ENCODE measurements at regions of chr4 and their contacts with region 1.

Region 1: DNA sequence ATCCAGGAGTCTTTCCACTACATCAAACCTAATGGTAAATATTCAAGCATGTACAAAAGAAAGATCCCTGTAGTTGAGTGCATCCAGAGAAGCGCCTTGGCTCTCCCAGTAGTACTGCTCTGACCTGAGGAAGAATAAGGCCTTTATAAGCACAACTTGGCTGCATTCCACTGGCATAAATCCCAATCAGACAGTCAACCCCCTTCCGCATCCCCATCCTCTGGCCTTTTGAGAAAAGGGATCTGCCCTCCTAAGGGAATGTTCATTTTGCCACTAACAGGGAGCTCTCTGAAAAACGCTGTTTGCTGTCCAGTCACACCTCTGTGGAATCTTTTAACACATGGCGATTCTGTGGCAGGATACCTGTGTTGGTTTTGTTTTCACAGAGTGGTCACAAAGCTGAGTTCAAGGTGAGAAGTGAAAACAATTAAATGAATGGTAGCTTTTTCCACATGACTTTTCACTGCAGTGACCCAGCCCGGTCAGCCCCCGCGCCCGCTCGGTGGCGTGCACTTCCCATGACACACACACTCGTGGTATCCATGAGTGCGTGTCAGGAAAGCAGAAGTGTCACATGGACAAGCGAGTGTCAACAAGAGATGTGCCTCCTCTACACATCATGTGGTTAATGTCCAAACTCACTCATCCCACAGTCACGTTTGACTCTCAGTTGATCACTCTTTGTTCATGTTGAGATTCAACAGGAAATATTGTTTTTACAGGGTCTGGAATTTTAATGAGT is 112.2 kb upstream of the ENPP6 start:
- DNase-seq: peak; percentile 70
- CTCF ChIP-seq: peak; percentile 35

Region 2: GRCh38 chr4:183797445-183798300 is 532.2 kb before region 1 on chr4:
- CTCF ChIA-PET with region 1: no interaction called
- POLR2A ChIA-PET with region 1: no interaction called
- DNase-seq: no peak
- CTCF ChIP-seq: no peak

Region 3: DNA sequence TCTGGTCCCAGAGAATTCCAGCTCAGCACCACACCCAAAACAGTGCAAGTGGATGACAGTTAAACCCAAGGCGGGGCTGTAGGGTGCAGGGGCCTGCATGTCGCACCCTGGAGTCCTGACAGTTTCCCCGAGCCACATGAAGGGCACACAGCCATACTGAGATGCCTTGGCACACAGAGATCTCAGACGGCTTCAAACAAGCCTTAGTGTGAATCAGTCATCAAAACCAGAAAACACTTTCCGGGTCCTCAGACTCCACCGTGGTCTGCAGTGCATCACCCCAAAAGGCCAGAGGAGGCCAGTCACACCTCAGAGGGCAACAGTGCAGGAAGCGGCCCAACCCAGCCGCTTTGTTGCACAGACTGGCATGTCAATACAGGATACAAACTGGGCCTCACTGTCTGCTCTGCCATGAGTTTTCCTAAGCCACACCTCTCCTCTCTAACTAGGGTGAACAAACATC is 47.5 kb before region 1 on chr4:
- CTCF ChIA-PET with region 1: interaction called, 23 read pairs
- POLR2A ChIA-PET with region 1: interaction called, 11 read pairs
- DNase-seq: peak; percentile 50
- CTCF ChIP-seq: peak; percentile 39

Region 4: DNA sequence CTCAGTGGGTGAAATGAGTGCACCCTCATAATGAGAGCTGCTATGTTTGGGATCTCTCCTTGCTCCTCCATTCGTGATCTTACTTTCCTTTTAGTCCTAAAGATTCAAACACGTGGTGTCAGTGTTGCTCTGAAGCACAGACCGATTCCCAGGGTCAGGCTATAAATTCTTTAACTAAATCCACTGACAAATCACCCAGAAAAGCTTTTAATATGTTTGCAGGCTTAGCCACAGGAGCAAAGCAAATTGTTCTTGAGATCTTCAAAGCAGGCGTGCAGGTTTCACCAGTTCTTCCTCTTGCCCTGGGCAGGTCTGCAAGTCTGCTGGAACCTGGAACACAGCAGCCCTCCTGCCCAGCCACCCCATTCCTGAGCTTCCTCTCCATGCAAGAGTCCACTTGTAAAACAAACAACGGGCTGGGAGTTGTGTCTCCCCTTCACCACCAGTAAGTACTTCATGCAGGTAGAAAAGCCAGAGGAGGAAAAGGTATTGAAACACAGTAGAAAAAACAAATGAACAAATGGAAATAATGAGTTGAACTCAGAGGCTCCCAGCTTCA is 42.1 kb before region 1 on chr4:
- CTCF ChIA-PET with region 1: interaction called, 23 read pairs
- POLR2A ChIA-PET with region 1: interaction called, 11 read pairs
- DNase-seq: no peak
- CTCF ChIP-seq: peak; percentile 12

Region 5: GRCh38 chr4:184310171-184310567 is 19.7 kb before region 1 on chr4:
- CTCF ChIA-PET with region 1: interaction called, 96 read pairs
- POLR2A ChIA-PET with region 1: interaction called, 7 read pairs
- DNase-seq: peak; percentile 57
- CTCF ChIP-seq: peak; percentile 44

Region 6: DNA sequence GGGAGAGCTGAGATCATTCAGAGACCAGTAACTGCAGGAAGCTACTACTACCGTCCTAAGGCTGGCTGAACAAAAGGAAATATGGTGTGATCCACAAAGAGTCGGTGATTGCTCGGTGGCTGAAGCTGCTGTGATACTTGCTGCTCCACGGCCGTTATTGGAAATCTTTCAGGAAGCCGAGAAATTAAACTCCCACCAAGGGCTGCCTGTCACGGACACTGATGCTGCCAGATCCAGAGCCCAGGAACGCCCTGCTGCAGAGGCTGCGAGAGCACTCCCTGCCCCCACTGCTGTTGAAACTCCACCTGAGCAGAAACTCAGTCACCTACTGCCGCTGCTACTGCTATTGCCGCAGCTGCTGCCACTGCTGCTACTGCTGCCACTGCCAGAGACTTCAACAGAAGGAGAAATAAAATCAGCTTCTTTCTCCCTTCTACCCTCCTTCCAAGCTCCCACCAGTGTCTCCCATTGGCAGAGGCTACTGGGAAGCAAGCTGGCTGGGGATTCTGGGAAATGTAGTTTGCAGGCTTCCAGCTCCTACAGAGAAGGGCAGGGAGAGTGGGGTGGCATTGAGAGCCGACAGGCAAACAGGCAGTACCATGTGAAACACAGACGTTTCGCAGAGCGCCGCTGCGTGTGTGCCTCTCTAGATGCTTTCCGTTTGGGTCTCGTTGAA is 13.8 kb after region 1 on chr4:
- CTCF ChIA-PET with region 1: interaction called, 39 read pairs
- POLR2A ChIA-PET with region 1: interaction called, 4 read pairs
- DNase-seq: no peak
- CTCF ChIP-seq: no peak

Region 7: DNA sequence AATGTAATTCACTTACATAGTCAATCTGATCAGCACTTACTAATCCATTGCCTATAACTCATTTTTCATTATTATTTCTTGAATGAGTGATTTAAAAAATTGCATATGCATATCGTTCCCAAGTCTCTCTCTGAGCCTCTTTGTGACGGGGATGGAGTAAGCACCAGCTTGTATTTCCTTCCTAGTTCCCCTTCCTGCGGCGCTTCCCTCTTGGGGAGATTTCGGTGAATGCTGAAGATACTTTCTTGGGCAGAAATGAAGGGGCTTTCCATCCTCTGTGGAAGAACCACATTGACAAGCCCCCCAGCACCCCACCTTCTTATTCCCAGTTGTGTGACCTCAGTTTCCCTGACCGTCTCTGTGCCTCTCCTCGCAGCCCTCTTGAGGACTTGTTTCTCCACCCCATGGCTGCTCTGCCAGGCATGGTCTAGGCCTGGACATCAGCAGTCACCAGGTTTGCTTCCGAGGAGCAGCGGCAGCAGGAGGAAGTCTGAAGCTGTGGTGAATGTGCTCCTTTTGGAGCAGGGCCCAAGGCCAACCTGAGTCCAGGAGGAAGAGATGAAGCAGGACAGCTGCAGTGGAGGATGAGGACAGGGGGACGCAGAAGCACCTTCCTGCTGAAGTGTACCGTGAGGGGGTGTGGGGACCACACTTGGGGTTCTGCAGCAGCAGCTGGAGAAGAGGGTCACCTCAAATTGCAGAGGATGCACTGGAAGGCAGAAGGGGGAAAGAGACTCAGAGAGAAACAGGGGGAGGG is 19.6 kb after region 1 on chr4:
- CTCF ChIA-PET with region 1: interaction called, 39 read pairs
- POLR2A ChIA-PET with region 1: interaction called, 4 read pairs
- DNase-seq: no peak
- CTCF ChIP-seq: no peak